Activated naive CD4-positive, alpha-beta T cell treated with anti-CD3 and anti-CD28 coated beads for 36 hours (primary cell): ENCODE measurements at regions of chr6 and their contacts with region 1.

Region 1: GRCh38 chr6:116010790-116011401 is 49.8 kb downstream of the FRK start:
- DNase-seq: peak; percentile 74
- H3K4me3 Mint-ChIP-seq: no peak overlapping the region
- H3K27ac Mint-ChIP-seq: peak overlapping the region; percentile 35
- H3K4me1 Mint-ChIP-seq: peaks cover 18% of the 10 kb centered on the region
- H3K27me3 Mint-ChIP-seq: peaks cover 16% of the 10 kb centered on the region

Region 2: GRCh38 chr6:116073765-116074419 is 63.0 kb after region 1 on chr6:
- CTCF ChIA-PET with region 1: no interaction called
- intact Hi-C with region 1: loop called (anchors 2 kb)
- DNase-seq: no peak
- H3K4me3 Mint-ChIP-seq: no peak overlapping the region
- H3K27ac Mint-ChIP-seq: no peak overlapping the region
- H3K4me1 Mint-ChIP-seq: peaks cover 3% of the 10 kb centered on the region
- H3K27me3 Mint-ChIP-seq: no peaks in the 10 kb centered on the region

Region 3: GRCh38 chr6:116253505-116254296 is 242.8 kb after region 1 on chr6 and contains the start of gene TSPYL4:
- CTCF ChIA-PET with region 1: no interaction called
- intact Hi-C with region 1: loop called (anchors 1 kb)
- DNase-seq: peak; percentile 95
- H3K4me3 Mint-ChIP-seq: no peak within 1 kb of the TSS
- H3K27ac Mint-ChIP-seq: no peak within 1 kb of the TSS
- H3K4me1 Mint-ChIP-seq: peaks cover 35% of the 10 kb centered on the region
- H3K27me3 Mint-ChIP-seq: no peaks in the 10 kb centered on the region
- total RNA-seq, gene TSPYL4: 7.8 to 8.0 TPM

Region 4: GRCh38 chr6:116461932-116462885 is 451.3 kb after region 1 on chr6:
- CTCF ChIA-PET with region 1: no interaction called
- intact Hi-C with region 1: loop called (anchors 2 kb)
- DNase-seq: peak; percentile 54
- H3K4me3 Mint-ChIP-seq: peak overlapping the region; percentile 56
- H3K27ac Mint-ChIP-seq: no peak overlapping the region
- H3K4me1 Mint-ChIP-seq: peaks cover 20% of the 10 kb centered on the region
- H3K27me3 Mint-ChIP-seq: peaks cover 22% of the 10 kb centered on the region

Region 5: GRCh38 chr6:116556065-116556464 is 545.2 kb after region 1 on chr6:
- CTCF ChIA-PET with region 1: no interaction called
- intact Hi-C with region 1: no loop called
- DNase-seq: no peak
- H3K4me3 Mint-ChIP-seq: no peak overlapping the region
- H3K27ac Mint-ChIP-seq: no peak overlapping the region
- H3K4me1 Mint-ChIP-seq: no peaks in the 10 kb centered on the region
- H3K27me3 Mint-ChIP-seq: peaks cover 13% of the 10 kb centered on the region

Region 6: GRCh38 chr6:116667623-116668022 is 656.7 kb after region 1 on chr6:
- CTCF ChIA-PET with region 1: no interaction called
- intact Hi-C with region 1: loop called (anchors 2 kb)
- DNase-seq: no peak
- H3K4me3 Mint-ChIP-seq: peak overlapping the region; percentile 99
- H3K27ac Mint-ChIP-seq: peak overlapping the region; percentile 12
- H3K4me1 Mint-ChIP-seq: peaks cover 35% of the 10 kb centered on the region
- H3K27me3 Mint-ChIP-seq: no peaks in the 10 kb centered on the region